Heart left ventricle (tissue), 16 donors: ENCODE measurements at regions of chr3 and their contacts with region 1.

Region 1: GRCh38 chr3:192816351-192816750 is 89.0 kb upstream of the FGF12 start:
- DNase-seq: no peak
- ATAC-seq: no peak
- H3K4me3 ChIP-seq: no peak overlapping the region
- H3K27ac ChIP-seq: no peak overlapping the region
- H3K4me1 ChIP-seq: peaks cover 0 to 26% (median 12%) of the 10 kb centered on the region in 12 donors
- H3K27me3 ChIP-seq: no peaks in the 10 kb centered on the region
- CTCF ChIP-seq: peak; percentile 59 to 89 (median 74)
- POLR2A ChIP-seq: no peak

Region 2: GRCh38 chr3:192917404-192918274 is 101.3 kb after region 1 on chr3 and contains the start of gene MB21D2:
- intact Hi-C with region 1: loop called in 8 of 10 experiments (anchors 2 to 5 kb)
- DNase-seq: peak; percentile 82 to 87 (median 84)
- ATAC-seq: peak; percentile 67 to 95 (median 88)
- H3K4me3 ChIP-seq: peak within 1 kb of the TSS; percentile 60 to 95 (median 76)
- H3K27ac ChIP-seq: peak within 1 kb of the TSS; percentile 72 to 97 (median 94)
- H3K4me1 ChIP-seq: peaks cover 0 to 37% (median 26%) of the 10 kb centered on the region in 12 donors
- H3K27me3 ChIP-seq: peaks cover 0 to 7% (median 0%) of the 10 kb centered on the region in 9 donors
- CTCF ChIP-seq: peak in 3 of 12 donors; percentile 13 to 50 (median 20)
- POLR2A ChIP-seq: peak in 1 of 2 donors; percentile 64
- total RNA-seq, gene MB21D2: 2.3 to 5.0 (median 4.0) TPM

Region 3: DNA sequence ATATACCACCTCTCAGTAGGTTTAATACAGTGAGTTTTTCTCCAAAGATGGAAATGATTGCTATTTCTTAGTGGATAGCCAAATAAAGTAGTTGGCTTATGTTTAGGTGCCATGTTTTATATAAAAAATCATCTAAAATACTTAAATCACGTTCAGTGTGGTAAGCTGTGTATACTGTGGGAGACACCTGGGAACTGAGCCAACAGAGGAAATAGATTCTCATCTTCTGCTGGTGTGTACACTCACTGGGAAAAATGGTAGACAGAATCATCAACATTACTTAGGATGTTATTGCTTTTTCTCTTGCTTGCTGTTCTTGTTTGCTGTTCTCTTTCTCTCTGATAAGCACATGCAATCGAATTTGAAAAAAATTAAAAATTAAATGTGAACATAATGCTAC is 213.9 kb after region 1 on chr3:
- intact Hi-C with region 1: no loop called
- DNase-seq: no peak
- ATAC-seq: no peak
- H3K4me3 ChIP-seq: no peak overlapping the region
- H3K27ac ChIP-seq: no peak overlapping the region
- H3K4me1 ChIP-seq: no peaks in the 10 kb centered on the region
- H3K27me3 ChIP-seq: no peaks in the 10 kb centered on the region
- CTCF ChIP-seq: no peak
- POLR2A ChIP-seq: no peak

Region 4: GRCh38 chr3:193190146-193190786 is 373.9 kb after region 1 on chr3:
- intact Hi-C with region 1: loop called in 1 of 10 experiments (anchors 10 kb)
- DNase-seq: no peak
- ATAC-seq: peak in 2 of 4 donors; percentile 38 to 43
- H3K4me3 ChIP-seq: no peak overlapping the region
- H3K27ac ChIP-seq: no peak overlapping the region
- H3K4me1 ChIP-seq: no peaks in the 10 kb centered on the region
- H3K27me3 ChIP-seq: no peaks in the 10 kb centered on the region
- CTCF ChIP-seq: peak; percentile 13 to 48 (median 33)
- POLR2A ChIP-seq: no peak

Region 5: DNA sequence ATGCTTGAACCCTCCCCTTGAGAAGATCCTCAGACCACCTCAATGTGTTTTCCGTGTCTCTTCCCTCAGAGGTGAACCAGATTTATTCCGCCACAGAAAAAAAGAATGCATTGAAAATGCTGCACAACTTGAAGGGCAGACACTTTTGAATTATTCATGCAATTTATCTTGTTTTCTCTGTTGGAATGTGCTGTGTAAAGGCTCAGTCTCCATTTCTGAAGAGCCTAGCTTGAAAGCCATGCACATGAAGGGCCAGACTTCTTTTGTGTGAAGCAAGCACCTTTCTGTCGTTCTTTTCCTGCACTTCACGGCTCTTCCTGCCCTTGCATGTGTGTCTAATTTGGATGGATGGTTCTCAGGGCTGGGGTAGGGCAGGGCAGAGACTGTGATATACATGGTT is 641.2 kb after region 1 on chr3:
- intact Hi-C with region 1: loop called in 7 of 10 experiments (anchors 5 to 10 kb)
- DNase-seq: no peak
- ATAC-seq: no peak
- H3K4me3 ChIP-seq: no peak overlapping the region
- H3K27ac ChIP-seq: no peak overlapping the region
- H3K4me1 ChIP-seq: peaks cover 0 to 7% (median 0%) of the 10 kb centered on the region in 12 donors
- H3K27me3 ChIP-seq: no peaks in the 10 kb centered on the region
- CTCF ChIP-seq: no peak
- POLR2A ChIP-seq: no peak

Region 6: GRCh38 chr3:193564012-193564411 is 747.7 kb after region 1 on chr3:
- intact Hi-C with region 1: loop called in 2 of 10 experiments (anchors 5 kb)
- DNase-seq: peak in 1 of 5 donors; percentile 28
- ATAC-seq: peak in 3 of 4 donors; percentile 66 to 72 (median 69)
- H3K4me3 ChIP-seq: no peak overlapping the region
- H3K27ac ChIP-seq: no peak overlapping the region
- H3K4me1 ChIP-seq: peaks cover 0 to 5% (median 0%) of the 10 kb centered on the region in 12 donors
- H3K27me3 ChIP-seq: no peaks in the 10 kb centered on the region
- CTCF ChIP-seq: peak in 5 of 12 donors; percentile 17 to 29 (median 23)
- POLR2A ChIP-seq: no peak